ENCODE measurements at regions of chr19 and their contacts with region 1.

Region 1: GRCh38 chr19:45306518-45307027 is 16.1 kb downstream of the CKM start:
- DNase-seq: no peak
- H3K4me3 ChIP-seq: no peak overlapping the region
- H3K27ac ChIP-seq: no peak overlapping the region
- H3K4me1 ChIP-seq: no peaks in the 10 kb centered on the region
- H3K27me3 ChIP-seq: no peaks in the 10 kb centered on the region
- CTCF ChIP-seq: no peak

Region 2: GRCh38 chr19:45069056-45069455 is 237.5 kb before region 1 on chr19:
- CTCF ChIA-PET with region 1: no interaction called
- POLR2A ChIA-PET with region 1: interaction called, 21 read pairs
- intact Hi-C with region 1: no loop called
- DNase-seq: peak in 1 of 2 experiments; percentile 34
- H3K4me3 ChIP-seq: no peak overlapping the region
- H3K27ac ChIP-seq: no peak overlapping the region
- H3K4me1 ChIP-seq: no peaks in the 10 kb centered on the region
- H3K27me3 ChIP-seq: no peaks in the 10 kb centered on the region
- CTCF ChIP-seq: no peak